ENCODE measurements at regions of chr1 and their contacts with region 1.

Region 1: DNA sequence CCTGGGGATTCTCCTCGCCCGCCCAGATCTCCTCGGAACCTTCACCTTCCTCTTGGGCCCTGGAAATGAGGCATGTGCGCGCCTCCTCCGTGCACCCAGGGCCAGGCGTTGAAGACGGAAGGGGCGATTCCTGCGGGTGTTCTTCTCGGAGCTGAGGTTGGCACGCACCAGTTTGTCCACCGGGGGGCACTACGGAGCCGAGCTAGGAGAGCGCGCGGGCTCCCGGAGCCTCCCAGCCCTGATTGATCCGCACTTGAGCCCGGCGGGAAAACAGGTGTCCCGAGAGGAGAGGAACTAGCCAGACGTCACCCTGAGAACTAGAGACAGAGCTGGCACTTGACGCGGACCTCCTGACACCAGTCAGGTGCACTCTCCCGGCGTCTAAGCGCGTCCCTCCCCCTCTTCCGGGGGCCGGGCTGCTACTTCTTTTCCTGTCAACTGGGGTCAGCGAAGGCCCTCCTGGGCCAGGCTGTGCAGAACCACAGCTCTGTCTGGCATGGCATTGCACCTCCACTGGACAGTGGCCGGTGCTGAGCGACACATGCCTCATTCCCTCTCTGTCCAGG is 18.3 kb upstream of the SERINC2 start:
- DNase-seq: peak; percentile 75 to 82 (median 80)
- H3K4me3 ChIP-seq: peak overlapping the region; percentile 23 to 82 (median 58)
- H3K27ac ChIP-seq: no peak overlapping the region
- H3K4me1 ChIP-seq: peaks cover 4 to 22% (median 11%) of the 10 kb centered on the region in 4 experiments
- H3K27me3 ChIP-seq: no peaks in the 10 kb centered on the region

Region 2: GRCh38 chr1:29736582-29737188 is 1658.0 kb before region 1 on chr1:
- CTCF ChIA-PET with region 1: no interaction called
- POLR2A ChIA-PET with region 1: no interaction called
- DNase-seq: peak; percentile 59 to 86 (median 82)
- H3K4me3 ChIP-seq: no peak overlapping the region
- H3K27ac ChIP-seq: no peak overlapping the region
- H3K4me1 ChIP-seq: peaks cover 0 to 12% (median 9%) of the 10 kb centered on the region in 4 experiments
- H3K27me3 ChIP-seq: peaks cover 0 to 13% (median 0%) of the 10 kb centered on the region in 5 experiments

Region 3: DNA sequence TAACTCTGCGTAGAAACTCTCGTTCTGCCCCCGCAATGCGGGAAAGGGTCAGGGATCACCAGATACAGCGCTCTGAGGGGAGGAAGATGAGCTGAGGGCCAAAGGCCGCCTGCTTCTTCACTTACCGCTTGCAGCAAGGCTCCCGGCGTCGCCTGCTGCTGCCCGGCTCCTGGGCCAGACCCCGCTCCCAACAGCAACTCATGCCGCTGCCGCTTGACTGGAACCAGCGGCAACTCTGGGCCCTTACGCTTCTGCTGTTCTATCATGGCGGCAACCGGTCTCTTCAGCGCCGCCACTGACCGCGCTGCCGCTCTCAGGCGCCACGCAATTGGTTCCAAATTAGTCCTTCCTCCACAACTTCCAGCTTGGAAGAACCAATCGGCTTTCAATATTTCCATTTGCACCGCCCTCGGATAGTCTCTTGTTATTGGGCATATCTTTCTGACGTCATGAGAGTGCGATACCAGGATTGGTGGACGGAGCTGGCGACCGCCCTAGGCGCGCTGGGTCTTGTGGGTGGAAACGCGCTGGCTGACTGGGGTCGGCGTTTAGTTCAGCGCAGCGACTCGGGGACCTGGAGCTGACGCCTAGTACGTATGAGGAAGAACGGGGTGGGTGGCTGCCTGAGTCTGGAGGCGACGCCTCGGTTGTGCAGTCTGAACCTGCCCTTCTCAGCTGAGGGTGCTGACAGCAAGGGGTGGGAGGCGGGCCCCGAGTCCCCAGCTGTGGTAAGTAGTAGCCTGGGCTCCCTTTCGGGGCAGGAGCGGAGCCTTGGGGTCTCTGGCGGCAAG is 98.0 kb before region 1 on chr1 and contains the starts of genes SNRNP40 and ZCCHC17:
- CTCF ChIA-PET with region 1: no interaction called
- POLR2A ChIA-PET with region 1: no interaction called
- DNase-seq: peak; percentile 99 to 100 (median 100)
- H3K4me3 ChIP-seq: peak within 1 kb of the TSS; percentile 83 to 98 (median 97)
- H3K27ac ChIP-seq: peak within 1 kb of the TSS; percentile 91 to 96
- H3K4me1 ChIP-seq: peaks cover 11 to 35% (median 16%) of the 10 kb centered on the region in 4 experiments
- H3K27me3 ChIP-seq: no peaks in the 10 kb centered on the region

Region 4: DNA sequence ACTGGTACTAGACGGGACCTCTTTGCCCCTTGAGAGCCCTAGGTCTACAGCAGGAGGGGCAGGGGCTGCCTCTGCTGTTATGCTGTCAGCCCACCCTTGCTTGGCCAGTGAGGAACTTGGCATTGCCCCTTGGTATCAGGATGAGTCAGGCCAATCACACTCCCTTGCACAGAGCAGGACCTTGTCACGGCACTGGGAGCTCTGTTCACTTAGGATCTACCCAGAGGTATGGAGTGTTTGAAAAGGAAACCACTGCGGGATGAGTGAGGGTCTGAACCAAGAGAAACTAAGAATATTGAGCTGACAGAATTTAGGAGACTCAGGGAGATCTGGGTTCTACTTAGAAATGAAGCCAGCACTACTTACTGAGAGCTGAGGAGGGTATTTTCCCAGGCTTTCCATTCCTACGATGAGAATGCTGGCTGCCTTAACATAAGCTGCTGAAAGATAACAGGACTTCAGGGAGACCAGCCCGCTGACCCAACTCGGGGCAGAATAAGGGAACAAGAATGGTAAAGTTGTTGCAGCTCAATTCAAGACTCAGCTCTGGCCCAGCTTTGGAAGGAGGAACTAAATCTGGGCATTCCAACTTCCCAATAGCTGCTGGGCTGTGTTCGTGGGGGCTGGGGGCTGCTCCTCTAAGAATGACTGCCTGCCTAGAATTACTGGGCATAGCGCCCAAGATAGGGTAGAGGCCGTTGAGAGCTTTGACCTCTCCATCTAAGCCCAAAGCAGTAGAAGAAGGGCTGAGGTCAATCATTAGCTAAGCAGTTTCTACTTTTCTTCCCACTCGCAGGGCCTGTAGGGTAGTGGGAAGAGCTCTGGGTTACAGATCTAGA is 23.4 kb before region 1 on chr1:
- CTCF ChIA-PET with region 1: interaction called, 10 read pairs
- POLR2A ChIA-PET with region 1: no interaction called
- DNase-seq: no peak
- H3K4me3 ChIP-seq: no peak overlapping the region
- H3K27ac ChIP-seq: no peak overlapping the region
- H3K4me1 ChIP-seq: peaks cover 0 to 16% (median 13%) of the 10 kb centered on the region in 4 experiments
- H3K27me3 ChIP-seq: peaks cover 0 to 9% (median 0%) of the 10 kb centered on the region in 5 experiments

Region 5: GRCh38 chr1:31405578-31406245 is 11.0 kb after region 1 on chr1:
- CTCF ChIA-PET with region 1: interaction called, 10 read pairs
- POLR2A ChIA-PET with region 1: no interaction called
- DNase-seq: no peak
- H3K4me3 ChIP-seq: no peak overlapping the region
- H3K27ac ChIP-seq: no peak overlapping the region
- H3K4me1 ChIP-seq: no peaks in the 10 kb centered on the region
- H3K27me3 ChIP-seq: peaks cover 0 to 9% (median 2%) of the 10 kb centered on the region in 5 experiments

Region 6: GRCh38 chr1:31584041-31584868 is 189.5 kb after region 1 on chr1:
- CTCF ChIA-PET with region 1: no interaction called
- POLR2A ChIA-PET with region 1: no interaction called
- DNase-seq: no peak
- H3K4me3 ChIP-seq: no peak overlapping the region
- H3K27ac ChIP-seq: no peak overlapping the region
- H3K4me1 ChIP-seq: peaks cover 0 to 20% (median 5%) of the 10 kb centered on the region in 4 experiments
- H3K27me3 ChIP-seq: peaks cover 0 to 12% (median 4%) of the 10 kb centered on the region in 5 experiments